IMR-90 (cell line): ENCODE measurements at regions of chr1 and their contacts with region 1.

Region 1: DNA sequence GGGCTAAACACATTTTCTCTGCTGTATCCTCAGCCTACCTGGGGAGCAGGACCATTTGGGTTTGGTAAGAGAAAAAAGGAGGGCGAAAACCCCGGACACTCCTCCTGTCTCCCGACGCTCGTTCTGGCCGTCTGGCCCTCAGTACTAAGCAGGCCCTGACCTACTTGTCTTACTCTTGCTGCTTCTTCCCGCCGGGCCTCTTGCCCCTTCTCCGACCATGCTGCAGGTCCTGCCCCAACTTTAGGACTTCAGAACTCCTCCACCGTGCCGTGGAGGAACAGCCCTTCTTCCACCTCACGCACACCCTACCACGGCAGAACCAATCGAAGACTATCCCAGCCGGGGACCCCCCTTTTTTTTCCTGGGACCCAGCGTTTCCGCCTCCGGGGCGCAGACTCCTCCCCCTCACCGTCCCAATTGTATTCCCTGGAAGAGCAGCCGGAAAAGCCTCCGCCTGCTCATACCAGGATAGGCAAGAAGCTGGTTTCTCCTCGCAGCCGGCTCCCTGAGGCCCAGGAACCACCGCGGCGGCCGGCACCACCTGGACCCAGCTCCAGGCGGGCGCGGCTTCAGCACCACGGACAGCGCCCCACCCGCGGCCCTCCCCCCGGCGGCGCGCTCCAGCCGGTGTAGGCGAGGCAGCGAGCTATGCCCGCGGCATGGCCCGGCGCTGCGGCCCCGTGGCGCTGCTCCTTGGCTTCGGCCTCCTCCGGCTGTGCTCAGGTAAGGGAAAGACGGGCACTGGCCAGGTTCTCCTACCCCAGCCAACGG is at the start of gene CHRNB2:
- DNase-seq: no peak
- ATAC-seq: peak; percentile 100
- H3K4me3 ChIP-seq: no peak within 1 kb of the TSS
- H3K27ac ChIP-seq: no peak within 1 kb of the TSS
- H3K4me1 ChIP-seq: no peaks in the 10 kb centered on the region
- H3K27me3 ChIP-seq: peaks cover 42% of the 10 kb centered on the region
- CTCF ChIP-seq: no peak
- POLR2A ChIP-seq: no peak
- RAD21 ChIP-seq: no peak; the same call in 1 of the 2 replicates
- total RNA-seq, gene CHRNB2: under 0.01 TPM in 1 of 2 replicates, not detected in the other

Region 2: DNA sequence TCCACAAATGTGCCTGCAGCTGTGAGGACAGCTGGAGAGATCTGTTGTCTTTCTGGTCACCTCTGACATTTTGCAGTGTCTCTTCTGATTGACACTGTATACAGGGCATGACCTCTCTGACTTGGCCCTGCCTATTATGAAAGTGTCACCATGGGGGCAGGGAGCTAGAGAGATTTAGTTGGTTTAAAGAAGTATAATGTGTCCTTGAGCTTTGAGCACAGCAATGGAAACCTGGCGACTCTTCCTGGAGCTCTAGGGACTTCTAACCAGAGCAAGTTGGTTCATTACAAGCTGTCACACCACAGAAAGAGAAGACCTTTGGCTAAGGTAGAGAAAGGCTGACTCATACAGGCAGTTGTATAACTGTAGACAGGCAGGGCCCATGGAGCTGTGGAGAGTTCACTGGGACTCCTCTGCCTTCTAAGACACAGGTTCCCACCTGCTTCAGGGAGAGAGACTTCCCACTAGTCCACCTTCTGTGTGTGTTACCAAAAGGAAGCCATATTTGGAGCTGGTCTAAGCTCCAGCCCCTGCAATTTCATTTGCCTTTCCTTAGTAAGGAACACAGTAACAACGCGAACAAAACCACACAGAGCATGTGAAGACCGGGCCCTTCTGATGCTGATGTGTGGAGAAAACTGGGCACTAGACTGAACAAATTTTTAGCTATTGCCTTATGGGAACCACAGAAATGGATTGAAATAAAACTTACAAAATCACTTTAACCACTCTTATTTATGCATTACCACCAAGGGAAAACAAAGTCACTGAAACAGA is 130.9 kb after region 1 on chr1:
- CTCF ChIA-PET with region 1: no interaction called
- POLR2A ChIA-PET with region 1: no interaction called
- dilution Hi-C with region 1: no loop called
- in situ Hi-C with region 1: no loop called
- intact Hi-C with region 1: no loop called
- DNase-seq: no peak
- ATAC-seq: no peak
- H3K4me3 ChIP-seq: no peak overlapping the region
- H3K27ac ChIP-seq: no peak overlapping the region
- H3K4me1 ChIP-seq: no peaks in the 10 kb centered on the region
- H3K27me3 ChIP-seq: peaks cover 35% of the 10 kb centered on the region
- CTCF ChIP-seq: no peak
- POLR2A ChIP-seq: no peak
- RAD21 ChIP-seq: no peak

Region 3: DNA sequence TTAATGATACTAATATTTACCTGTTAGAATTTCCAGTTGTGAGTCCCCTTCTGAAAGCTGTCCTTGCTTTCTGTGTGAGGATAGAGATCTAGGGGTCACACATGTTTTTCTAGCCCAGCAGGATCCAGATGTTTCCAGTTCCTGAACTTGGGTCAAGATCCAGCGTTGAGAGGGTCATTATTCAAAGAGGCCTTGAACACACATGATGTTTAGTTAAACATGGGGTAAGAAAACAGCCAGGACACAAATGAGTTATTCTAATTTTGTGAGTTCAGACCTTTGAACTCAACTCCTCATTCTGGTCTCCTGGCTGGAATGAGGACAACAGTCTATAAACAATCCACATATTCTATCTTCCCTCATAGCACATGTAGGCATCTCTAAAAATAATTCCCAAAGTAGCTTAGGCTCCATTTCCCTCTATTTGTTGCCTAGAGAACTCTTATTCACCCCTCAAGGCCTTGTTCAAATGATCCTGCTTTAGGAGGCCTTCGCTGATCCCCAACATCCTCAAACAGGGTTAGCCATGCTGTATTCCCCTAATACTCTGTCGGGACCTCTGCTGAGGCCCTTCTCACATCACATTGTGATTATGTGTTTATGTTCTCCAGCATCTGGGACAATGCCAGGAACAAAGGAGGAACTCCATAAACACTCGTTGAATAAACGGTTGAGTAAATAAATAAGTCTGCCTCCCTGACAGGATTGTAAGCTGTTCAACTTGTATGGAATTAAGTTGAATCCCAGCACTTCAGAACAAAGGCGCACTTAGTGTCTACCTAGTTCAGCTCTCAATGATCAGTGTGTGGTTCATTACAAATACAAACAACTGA is 317.5 kb after region 1 on chr1:
- CTCF ChIA-PET with region 1: no interaction called
- POLR2A ChIA-PET with region 1: no interaction called
- dilution Hi-C with region 1: no loop called
- in situ Hi-C with region 1: loop called (anchors 5 kb)
- intact Hi-C with region 1: no loop called
- DNase-seq: no peak
- ATAC-seq: no peak
- H3K4me3 ChIP-seq: no peak overlapping the region
- H3K27ac ChIP-seq: no peak overlapping the region
- H3K4me1 ChIP-seq: no peaks in the 10 kb centered on the region
- H3K27me3 ChIP-seq: peaks cover 79% of the 10 kb centered on the region
- CTCF ChIP-seq: no peak
- POLR2A ChIP-seq: no peak
- RAD21 ChIP-seq: no peak